ENCODE measurements at regions of chr9 and their contacts with region 1.

Region 1: DNA sequence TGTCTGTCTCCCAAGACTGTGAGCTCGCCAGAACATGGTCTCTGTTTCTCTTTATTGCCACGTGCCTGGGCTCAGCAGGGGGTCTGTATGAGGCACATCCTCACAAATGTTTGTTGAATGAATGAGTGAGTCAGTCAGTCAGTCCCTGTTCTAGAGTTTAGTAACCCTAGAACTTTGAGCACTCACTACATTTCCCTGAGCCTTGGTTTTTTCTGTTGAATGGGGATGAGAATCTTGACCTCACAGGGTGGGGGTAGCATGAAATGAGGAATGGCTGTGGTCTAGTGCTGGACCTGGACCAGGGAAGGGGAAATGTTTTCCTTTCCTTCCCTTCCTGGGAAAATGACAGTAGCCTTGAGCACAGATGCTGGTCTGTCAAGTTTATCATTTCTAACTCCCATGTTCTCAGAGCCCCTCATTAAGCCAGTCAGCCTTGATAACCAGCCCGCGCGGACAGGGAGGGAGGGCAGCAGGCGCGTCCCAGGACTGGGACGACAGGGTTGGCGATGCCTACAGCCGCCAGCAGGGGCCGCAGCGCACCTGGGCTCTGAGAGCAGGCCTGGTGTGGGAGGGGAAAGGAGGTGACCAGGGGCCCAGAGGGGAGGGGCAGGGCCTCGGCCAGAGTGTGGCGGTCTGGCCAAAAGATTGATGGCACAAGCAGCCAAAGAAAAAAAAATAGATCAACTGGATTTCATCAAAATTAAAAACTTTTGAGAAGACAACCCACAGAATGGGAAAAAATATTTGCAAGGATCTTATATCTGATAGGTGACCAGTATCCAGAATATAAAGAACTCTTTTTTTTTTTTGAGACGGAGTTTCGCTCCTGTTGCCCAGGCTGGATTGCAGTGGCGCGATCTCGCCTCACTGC is 24.1 kb upstream of the WNK2 start:
- DNase-seq: peak; percentile 85 to 86
- ATAC-seq: peak; percentile 89 to 97 (median 94)
- H3K4me3 ChIP-seq: no peak overlapping the region
- H3K27ac ChIP-seq: no peak overlapping the region
- H3K4me1 ChIP-seq: peaks cover 4 to 34% (median 19%) of the 10 kb centered on the region in 9 donors
- H3K27me3 ChIP-seq: no peaks in the 10 kb centered on the region
- CTCF ChIP-seq: peak in 8 of 9 donors; percentile 71 to 98 (median 96)

Region 2: GRCh38 chr9:92696619-92697018 is 463.2 kb before region 1 on chr9:
- intact Hi-C with region 1: no loop called
- DNase-seq: no peak
- ATAC-seq: no peak
- H3K4me3 ChIP-seq: no peak overlapping the region
- H3K27ac ChIP-seq: no peak overlapping the region
- H3K4me1 ChIP-seq: no peaks in the 10 kb centered on the region
- H3K27me3 ChIP-seq: no peaks in the 10 kb centered on the region
- CTCF ChIP-seq: no peak

Region 3: DNA sequence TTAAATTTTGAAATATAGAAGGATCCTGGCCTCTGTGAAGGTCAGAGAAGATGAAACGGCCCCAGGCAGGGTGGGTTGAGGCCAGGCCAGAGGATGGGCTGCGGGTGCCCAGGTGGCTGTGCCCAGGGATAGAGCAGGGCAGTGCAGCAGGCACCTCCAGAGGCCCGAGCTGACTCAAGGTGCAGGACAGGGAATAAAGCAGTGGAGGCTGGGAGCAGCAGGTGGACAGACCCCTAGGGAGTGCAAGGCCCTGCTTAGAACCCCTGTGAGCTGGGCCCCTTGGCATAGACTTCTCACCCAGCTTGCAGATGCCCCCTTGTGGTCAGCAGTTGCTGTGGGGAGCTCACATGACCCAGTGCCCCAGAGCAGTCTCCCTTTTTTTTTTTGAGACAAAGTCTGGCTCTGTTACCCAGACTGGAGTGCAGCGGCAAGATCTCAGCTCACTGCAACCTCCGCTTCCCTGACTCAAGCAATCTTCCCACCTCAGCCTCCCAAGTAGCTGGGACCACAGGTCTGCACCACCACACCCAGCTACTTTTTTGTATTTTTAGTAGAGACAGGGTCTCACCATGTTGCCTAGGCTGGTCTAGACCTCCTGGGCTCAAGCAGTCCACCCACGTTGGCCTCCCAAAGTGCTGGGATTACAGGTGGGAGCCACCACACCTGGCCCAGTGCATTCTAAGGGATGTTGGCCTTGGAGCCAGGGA is 142.9 kb after region 1 on chr9:
- intact Hi-C with region 1: loop called (anchors 1 to 5 kb)
- DNase-seq: peak in 1 of 2 donors; percentile 45
- ATAC-seq: peak in 4 of 8 donors; percentile 21 to 57 (median 32)
- H3K4me3 ChIP-seq: no peak overlapping the region
- H3K27ac ChIP-seq: no peak overlapping the region
- H3K4me1 ChIP-seq: peaks cover 9 to 71% (median 30%) of the 10 kb centered on the region in 9 donors
- H3K27me3 ChIP-seq: no peaks in the 10 kb centered on the region
- CTCF ChIP-seq: peak in 8 of 9 donors; percentile 17 to 71 (median 58)

Region 4: GRCh38 chr9:93444301-93444700 is 284.5 kb after region 1 on chr9:
- intact Hi-C with region 1: loop called in 1 of 10 experiments (anchors 10 kb)
- DNase-seq: no peak
- ATAC-seq: no peak
- H3K4me3 ChIP-seq: no peak overlapping the region
- H3K27ac ChIP-seq: no peak overlapping the region
- H3K4me1 ChIP-seq: peaks cover 0 to 11% (median 3%) of the 10 kb centered on the region in 9 donors
- H3K27me3 ChIP-seq: no peaks in the 10 kb centered on the region
- CTCF ChIP-seq: no peak

Region 5: DNA sequence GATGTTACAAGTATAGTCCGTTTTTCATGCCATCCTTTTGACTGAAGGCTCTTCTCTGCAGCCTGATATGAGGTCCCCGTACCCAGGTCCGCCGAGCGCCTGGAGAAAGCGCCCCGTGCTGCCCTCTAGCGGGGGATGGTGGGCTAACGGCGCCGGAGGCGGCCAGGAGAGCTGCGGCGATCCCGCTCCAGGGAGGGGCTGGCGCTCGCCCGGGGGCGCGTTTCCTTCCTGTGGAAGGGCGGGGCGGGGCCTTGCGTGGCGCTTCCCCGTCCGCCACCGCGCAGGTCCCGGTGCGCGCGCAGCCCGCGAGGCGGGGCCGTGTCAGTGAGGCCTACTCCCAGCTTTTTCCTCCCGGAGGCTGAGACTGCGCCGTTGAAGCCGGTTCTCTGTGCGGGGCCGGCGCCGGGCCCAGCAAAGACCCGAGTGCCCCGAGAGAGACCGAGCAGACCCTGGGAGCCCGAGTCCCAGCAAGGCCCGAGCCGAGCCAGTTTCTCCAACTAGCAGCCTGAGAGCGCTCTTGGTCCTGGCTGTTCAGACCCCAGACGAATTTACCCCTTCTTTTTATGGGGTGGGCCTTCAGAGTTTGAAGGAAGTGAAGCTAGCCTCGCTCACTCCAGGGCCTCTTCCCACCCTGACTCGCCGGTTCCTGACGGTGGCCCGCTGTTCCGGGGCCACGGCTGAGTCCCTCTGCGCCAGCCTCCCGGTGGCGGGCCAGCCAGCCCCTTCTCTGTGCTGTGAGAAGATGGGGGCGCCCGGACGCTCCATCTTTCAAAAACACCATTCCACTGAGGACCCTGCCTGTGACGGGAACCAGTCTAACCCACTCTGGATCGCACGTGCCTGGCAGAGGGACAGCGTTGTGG is 406.8 kb after region 1 on chr9:
- intact Hi-C with region 1: loop called in 1 of 10 experiments (anchors 10 kb)
- DNase-seq: peak; percentile 98 to 99
- ATAC-seq: peak; percentile 98 to 99 (median 99)
- H3K4me3 ChIP-seq: peak overlapping the region; percentile 31 to 76 (median 64)
- H3K27ac ChIP-seq: peak overlapping the region; percentile 83 to 99 (median 94)
- H3K4me1 ChIP-seq: peaks cover 4 to 27% (median 14%) of the 10 kb centered on the region in 9 donors
- H3K27me3 ChIP-seq: no peaks in the 10 kb centered on the region
- CTCF ChIP-seq: peak; percentile 93 to 100 (median 98)

Region 6: DNA sequence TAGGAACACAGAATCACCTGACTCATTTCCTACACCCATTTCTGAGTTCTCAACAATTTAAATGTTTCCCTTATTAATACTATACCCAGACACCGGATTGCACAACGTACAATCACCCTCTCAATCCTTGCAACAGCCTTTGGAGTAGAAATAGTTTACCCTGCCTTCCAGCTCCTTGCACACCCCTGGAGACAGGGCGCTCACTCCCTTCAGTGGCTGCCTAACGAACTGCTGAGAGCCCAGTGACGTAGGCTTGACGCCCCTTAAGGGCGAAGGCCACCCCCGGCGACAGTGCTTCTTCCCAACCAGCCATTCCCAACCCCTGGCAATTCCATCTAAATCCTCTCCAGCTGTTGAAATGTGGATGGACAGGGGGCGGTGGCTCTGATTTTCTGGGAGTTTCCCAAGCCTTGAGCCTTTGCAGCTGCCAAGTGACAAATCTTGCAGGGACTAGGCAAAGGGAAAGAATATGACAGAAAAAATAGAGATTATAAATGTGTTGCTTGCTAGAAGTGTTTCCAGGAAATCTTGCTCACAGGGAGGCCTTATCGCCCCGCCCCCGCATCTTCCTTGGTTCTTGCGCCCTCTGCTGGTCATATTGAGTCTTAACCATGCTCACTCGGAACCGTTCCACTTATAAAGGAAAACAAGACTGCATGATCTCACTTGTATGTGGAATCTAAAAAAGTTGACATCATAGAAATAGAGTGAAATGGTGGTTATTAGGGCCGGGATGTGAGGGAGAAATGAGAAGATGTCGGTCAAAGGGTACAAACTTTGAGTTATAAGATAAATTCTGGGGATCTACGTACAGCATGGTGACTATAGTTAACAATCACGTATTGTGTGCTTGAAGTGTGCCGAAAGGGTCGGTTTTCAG is 803.0 kb after region 1 on chr9:
- intact Hi-C with region 1: loop called in 1 of 10 experiments (anchors 10 kb)
- DNase-seq: peak; percentile 66 to 85
- ATAC-seq: peak; percentile 71 to 90 (median 82)
- H3K4me3 ChIP-seq: no peak overlapping the region
- H3K27ac ChIP-seq: no peak overlapping the region
- H3K4me1 ChIP-seq: peaks cover 16 to 36% (median 31%) of the 10 kb centered on the region in 9 donors
- H3K27me3 ChIP-seq: peaks cover 33 to 78% (median 71%) of the 10 kb centered on the region in 7 donors
- CTCF ChIP-seq: peak; percentile 82 to 90 (median 87)

Measured in heart right ventricle (tissue), 16 donors.